ENCODE measurements at regions of chr2 and their contacts with region 1.

Region 1: DNA sequence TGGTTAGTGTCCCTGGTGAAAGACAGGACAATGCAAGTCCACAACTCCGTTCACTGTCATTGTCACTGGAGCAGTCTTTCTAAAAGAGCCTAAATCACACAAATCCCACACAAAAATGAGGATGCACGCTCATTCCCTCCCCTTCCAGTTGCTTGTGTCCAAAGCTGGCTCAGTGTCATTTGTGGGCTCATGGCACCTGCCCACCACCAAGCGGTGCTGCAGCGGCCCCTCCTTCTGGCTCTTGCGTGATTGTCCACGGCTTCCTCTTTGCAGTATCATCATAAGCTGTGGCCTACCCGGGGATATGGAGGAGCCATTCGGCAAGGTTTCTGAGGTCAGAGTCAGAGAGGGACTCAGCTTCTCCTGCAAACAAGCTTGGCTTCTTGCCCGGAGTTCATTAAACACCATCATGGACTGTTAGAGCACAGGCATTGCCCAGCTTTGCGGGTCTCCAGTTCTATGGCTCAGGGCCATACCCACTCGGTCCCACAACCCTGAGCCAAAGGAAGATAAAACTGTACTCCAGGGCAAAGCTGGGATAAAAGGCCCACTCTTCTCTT is 179.4 kb upstream of the AGAP1 start:
- DNase-seq: no peak
- H3K4me3 ChIP-seq: no peak overlapping the region
- H3K27ac ChIP-seq: no peak overlapping the region
- H3K4me1 ChIP-seq: no peaks in the 10 kb centered on the region
- H3K27me3 ChIP-seq: no peaks in the 10 kb centered on the region
- CTCF ChIP-seq: no peak
- EP300 ChIP-seq: no peak
- POLR2A ChIP-seq: no peak
- RAD21 ChIP-seq: peak; percentile 25 to 37; a peak in 2 of 4 replicates

Region 2: DNA sequence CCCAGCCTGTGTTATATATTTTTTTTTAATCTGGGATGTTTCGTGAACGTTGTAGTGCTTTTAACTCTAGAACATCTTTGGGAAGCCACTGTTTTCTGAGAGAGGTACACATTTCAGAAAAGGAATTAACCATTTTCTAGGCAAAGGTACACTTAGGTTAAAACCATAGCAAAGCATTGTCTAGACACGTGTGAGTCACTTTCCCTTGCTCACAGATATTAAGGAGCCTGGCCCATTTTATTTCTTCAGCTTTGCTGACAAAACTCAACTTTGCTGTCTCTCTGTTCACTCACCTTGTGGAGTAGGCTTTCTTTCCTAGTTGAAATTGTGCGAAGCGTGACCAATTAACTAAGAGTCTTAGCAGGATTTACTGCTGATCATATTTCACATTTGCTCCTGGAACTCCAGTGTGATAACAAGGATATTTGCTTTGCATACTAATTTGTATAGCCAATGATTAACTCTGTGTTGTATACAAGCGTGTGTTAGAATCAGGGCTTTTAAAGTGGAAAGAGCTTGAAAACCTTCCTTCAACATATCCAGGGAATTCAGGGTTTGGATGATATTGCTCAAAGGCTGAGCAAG is 35.6 kb before region 1 on chr2:
- CTCF ChIA-PET with region 1: no interaction called
- POLR2A ChIA-PET with region 1: no interaction called
- DNase-seq: no peak
- H3K4me3 ChIP-seq: no peak overlapping the region
- H3K27ac ChIP-seq: no peak overlapping the region
- H3K4me1 ChIP-seq: no peaks in the 10 kb centered on the region
- H3K27me3 ChIP-seq: no peaks in the 10 kb centered on the region
- CTCF ChIP-seq: no peak
- EP300 ChIP-seq: no peak
- POLR2A ChIP-seq: no peak
- RAD21 ChIP-seq: no peak

Region 3: DNA sequence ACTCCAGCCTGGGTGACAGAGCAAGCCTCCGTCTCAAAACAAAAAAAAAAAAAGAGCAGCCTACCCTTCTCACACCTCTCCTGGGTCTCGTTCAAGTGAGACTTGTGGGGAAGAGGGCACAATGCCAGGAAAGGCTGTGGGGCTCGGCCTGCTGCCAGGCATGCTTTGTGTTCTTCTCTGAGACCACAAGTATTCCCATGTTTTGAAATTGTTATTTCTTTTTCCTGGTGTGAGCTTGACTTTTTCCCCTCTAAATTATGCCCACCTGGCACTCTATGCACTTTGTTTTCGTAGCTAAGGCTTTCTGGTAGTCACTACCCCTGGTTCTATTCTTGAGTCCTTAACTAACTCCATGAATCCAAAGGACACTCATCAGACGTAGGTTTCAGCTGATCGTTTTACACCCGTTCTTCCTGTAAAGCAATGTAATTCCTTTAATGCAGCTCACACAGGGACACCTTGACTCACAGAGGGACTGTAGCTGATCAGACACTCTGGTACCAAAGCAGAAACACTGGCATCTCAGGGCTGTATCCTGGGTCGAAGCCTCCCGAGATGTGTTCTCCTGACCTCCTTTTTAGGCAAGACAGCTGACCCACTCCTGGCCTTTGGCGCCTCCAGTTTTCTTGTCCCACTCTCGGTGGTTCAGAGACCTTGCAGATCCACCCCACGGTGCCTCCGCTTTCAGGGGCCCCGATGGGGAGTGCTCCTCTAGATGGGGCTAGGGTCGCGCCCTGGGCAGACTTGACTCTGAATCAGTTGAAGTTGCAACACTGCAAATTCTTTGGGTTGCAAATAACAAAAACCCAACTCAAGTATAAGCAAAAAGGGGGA is 13.9 kb before region 1 on chr2:
- CTCF ChIA-PET with region 1: interaction called, 10 read pairs
- POLR2A ChIA-PET with region 1: interaction called, 3 read pairs
- DNase-seq: no peak
- H3K4me3 ChIP-seq: no peak overlapping the region
- H3K27ac ChIP-seq: no peak overlapping the region
- H3K4me1 ChIP-seq: peaks cover 0 to 6% (median 0%) of the 10 kb centered on the region in 4 experiments; a peak in 2 of 7 replicates
- H3K27me3 ChIP-seq: no peaks in the 10 kb centered on the region; a peak in 2 of 7 replicates
- CTCF ChIP-seq: no peak
- EP300 ChIP-seq: no peak
- POLR2A ChIP-seq: no peak
- RAD21 ChIP-seq: no peak

Measured in H1 (cell line).